Dendritic cell treated with granulocyte-macrophage colony-stimulating factor and Interleukin-4, amounts not matched to agents 40 ng/mL and 50 ng/mL, for 4 days (primary cell): ENCODE measurements at regions of chr14 and their contacts with region 1.

Region 1: DNA sequence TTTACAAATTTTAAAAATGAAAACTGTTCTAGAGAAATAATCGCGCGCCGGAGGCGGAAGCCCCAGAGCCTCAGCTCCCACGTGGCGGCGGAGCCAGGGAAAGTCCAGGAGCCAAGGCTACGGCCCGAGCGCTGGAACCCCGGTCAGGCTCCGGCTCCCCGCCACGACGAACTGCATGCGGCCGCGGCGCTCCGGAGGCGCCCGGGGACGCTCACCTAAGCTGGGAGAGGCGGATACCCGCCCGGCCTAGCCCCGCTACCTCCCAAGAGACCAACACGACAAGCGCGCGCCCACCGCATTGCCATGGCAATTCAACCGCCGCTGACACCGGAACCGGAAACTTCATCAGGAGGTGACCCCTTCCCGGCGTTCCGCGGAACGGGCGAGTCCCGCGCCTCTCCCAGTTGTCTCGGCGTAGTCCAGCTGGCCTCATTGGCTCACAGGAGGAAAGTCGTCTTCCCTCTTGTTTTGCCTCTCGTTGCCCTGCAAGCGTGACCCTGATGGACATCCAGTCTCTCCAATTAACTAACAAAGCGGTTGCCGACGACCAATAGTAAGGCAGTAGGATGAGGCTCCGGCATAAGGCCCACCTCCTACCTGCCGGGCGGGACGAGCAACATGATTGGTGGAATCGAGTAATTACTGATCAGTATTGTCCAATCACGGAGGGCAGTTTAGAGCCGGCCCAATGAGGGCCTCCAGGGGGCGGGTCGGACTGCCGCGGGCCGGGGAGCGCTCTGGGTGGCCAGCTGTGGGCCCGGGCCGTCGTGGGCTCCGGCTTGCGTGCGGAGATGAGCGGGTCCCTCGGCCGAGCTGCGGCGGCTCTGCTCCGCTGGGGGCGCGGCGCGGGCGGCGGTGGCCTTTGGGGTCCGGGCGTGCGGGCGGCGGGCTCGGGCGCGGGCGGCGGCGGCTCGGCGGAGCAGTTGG is at the start of gene GLRX5:
- H3K4me3 Mint-ChIP-seq: peak within 1 kb of the TSS; percentile 91
- H3K27ac Mint-ChIP-seq: peak within 1 kb of the TSS; percentile 91
- H3K4me1 Mint-ChIP-seq: peaks cover 51% of the 10 kb centered on the region
- H3K27me3 Mint-ChIP-seq: no peaks in the 10 kb centered on the region

Region 2: DNA sequence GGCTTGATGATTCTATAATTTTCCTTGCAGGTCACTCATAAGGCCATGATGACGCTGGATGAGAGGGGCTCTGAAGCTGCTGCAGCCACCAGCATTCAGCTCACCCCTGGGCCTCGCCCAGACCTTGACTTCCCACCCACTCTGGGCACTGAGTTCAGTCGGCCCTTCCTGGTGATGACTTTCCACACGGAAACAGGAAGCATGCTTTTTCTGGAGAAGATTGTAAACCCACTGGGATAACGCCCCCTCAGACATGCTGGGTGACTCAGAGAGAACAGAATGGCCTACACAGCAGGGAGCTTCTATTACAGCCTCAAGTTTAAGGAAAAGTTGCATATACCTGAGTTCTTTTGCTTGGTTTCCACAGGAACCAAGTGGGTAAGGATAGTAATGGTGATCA is 888.1 kb before region 1 on chr14:
- intact Hi-C with region 1: no loop called
- H3K4me3 Mint-ChIP-seq: no peak overlapping the region
- H3K27ac Mint-ChIP-seq: no peak overlapping the region
- H3K4me1 Mint-ChIP-seq: peaks cover 19% of the 10 kb centered on the region
- H3K27me3 Mint-ChIP-seq: peaks cover 18% of the 10 kb centered on the region

Region 3: GRCh38 chr14:95442633-95443021 is 91.9 kb before region 1 on chr14:
- intact Hi-C with region 1: loop called (anchors 2 kb)
- H3K4me3 Mint-ChIP-seq: no peak overlapping the region
- H3K27ac Mint-ChIP-seq: no peak overlapping the region
- H3K4me1 Mint-ChIP-seq: no peaks in the 10 kb centered on the region
- H3K27me3 Mint-ChIP-seq: no peaks in the 10 kb centered on the region

Region 4: DNA sequence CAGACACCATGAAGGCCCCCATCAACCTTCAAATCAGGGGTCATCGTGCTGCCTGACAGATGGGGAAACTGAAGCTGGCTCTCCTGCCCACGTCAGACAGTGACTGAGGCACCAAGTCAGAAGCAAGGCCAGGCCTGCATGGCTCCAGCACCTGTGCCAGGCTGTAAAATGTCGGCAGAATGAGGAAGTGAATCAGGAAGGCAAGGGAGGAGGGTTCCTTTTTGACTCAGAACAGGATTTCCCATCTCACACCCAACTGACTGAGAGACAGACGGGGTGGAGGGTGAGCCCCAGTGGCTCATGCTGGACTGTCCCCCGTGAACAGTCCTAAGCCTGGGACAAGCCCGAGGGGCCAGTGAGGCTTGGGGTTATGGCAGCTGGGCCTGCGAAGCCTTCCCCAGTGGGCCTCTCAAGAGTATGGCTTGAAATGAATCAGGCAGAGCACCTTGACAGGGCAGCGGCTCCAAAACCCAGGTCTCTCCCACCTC is 39.0 kb before region 1 on chr14:
- intact Hi-C with region 1: loop called (anchors 5 kb)
- H3K4me3 Mint-ChIP-seq: peak overlapping the region; percentile 60
- H3K27ac Mint-ChIP-seq: peak overlapping the region; percentile 89
- H3K4me1 Mint-ChIP-seq: peaks cover 75% of the 10 kb centered on the region
- H3K27me3 Mint-ChIP-seq: no peaks in the 10 kb centered on the region

Region 5: GRCh38 chr14:95507701-95508103 is 26.9 kb before region 1 on chr14:
- intact Hi-C with region 1: loop called (anchors 1 kb)
- H3K4me3 Mint-ChIP-seq: no peak overlapping the region
- H3K27ac Mint-ChIP-seq: peak overlapping the region; percentile 71
- H3K4me1 Mint-ChIP-seq: peaks cover 85% of the 10 kb centered on the region
- H3K27me3 Mint-ChIP-seq: no peaks in the 10 kb centered on the region

Region 6: DNA sequence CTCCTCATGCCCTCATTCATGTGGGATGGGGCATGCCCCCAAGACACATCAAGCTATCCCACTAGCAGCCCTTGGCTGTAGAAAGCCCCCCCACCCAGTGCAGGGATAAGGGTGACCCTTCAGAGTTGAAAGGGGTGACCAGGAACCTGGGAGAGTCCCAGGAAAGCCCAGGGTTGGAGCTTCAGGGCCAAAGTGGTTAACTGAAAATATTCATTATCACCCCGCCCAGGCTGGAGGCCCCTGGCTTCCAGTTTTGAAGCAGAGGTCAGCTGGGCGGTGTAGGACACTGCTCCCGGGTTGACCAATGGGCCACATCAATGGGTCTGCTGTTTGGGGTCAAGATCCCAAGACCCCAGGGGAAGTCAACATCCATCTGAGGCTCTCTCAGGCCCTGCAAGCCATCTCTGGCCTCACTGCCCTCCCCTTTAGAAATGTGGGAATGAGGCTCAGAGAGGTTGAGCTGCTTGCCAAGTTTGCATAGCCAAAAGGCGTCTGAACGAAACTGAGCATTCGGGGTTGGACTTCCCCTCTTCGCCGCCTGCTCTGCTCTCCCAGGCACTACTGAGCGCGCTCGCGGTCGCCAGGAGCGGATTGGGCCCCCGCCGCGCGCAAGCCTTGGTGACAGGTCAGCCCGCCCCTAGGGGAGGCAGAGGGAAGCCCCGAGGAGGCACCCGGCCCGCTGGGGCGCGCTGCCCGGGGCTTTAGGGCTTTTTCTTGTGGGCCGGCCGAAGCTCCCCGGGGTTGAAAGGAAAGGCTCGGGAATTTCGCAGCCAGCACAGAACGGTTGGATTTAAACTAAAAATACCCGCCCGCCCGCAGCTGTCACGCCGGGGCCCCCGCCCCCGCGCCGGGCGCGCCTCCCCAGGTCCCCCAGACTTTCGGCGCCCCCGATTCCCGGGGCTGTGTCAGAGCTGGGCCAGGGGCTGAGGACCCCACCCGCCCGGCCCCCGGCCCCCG is 18.7 kb before region 1 on chr14:
- intact Hi-C with region 1: loop called (anchors 1 kb)
- H3K4me3 Mint-ChIP-seq: peak overlapping the region; percentile 82
- H3K27ac Mint-ChIP-seq: peak overlapping the region; percentile 91
- H3K4me1 Mint-ChIP-seq: peaks cover 78% of the 10 kb centered on the region
- H3K27me3 Mint-ChIP-seq: no peaks in the 10 kb centered on the region

Region 7: DNA sequence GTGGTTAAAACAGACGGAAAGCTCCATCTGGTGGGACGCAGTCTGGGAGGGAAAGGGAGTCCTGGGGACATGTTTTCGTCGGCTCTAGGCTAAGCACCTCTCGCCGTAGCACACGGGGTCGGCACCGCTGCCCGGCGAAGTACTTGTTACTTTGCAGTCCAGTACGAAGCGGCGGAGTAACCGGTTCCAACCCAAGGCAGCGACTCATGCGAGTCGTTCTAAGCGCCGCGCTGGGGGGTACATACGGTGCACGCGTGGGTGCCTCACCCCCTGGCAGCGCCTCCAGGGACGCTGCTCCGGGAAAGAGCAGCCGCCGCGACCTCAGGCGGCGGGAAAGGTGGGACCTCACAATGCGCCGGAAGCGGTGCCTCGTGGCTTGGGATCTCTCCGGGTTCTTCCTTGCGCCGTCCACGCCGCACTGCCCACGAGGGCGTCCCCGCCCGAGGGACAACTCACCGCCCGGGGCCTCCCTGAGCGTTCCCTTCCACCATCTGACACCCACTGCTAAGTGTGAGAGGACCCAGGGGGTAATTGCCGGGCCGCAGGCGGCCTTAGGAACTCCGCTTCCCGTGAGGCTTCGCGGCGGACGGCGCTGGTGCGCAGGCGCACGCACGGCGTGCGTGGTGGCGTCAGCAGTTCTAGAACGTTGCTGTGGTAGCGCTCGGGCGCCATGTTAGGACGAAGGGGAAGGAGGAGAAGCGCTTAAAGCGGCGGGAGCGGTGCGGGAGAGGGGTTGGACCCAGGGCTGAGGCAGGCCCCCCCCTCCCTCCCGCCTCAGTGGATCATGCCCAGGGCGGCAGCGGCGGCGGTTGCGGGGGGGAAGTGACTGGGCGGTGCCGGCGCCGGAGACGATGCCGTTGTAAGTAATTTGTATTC is 967.4 kb after region 1 on chr14 and contains the start of gene PAPOLA:
- intact Hi-C with region 1: loop called (anchors 10 kb)
- H3K4me3 Mint-ChIP-seq: peak within 1 kb of the TSS; percentile 97
- H3K27ac Mint-ChIP-seq: peak within 1 kb of the TSS; percentile 97
- H3K4me1 Mint-ChIP-seq: peaks cover 53% of the 10 kb centered on the region
- H3K27me3 Mint-ChIP-seq: no peaks in the 10 kb centered on the region